ENCODE measurements at regions of chr17 and their contacts with region 1.

Region 1: GRCh38 chr17:81094509-81095382 is 59.8 kb downstream of the BAIAP2 start:
- DNase-seq: peak; percentile 100
- ATAC-seq: peak; percentile 76
- H3K4me3 ChIP-seq: no peak overlapping the region
- H3K27ac ChIP-seq: peak overlapping the region; percentile 58
- H3K4me1 ChIP-seq: peaks cover 37% of the 10 kb centered on the region
- H3K27me3 ChIP-seq: no peaks in the 10 kb centered on the region
- CTCF ChIP-seq: 0 out of 2 replicates have a peak, but pooled peaks have one; percentile 8
- POLR2A ChIP-seq: peak; percentile 79
- RAD21 ChIP-seq: no peak; the same call in 1 of the 2 replicates

Region 2: GRCh38 chr17:81025741-81026129 is 69.0 kb before region 1 on chr17:
- CTCF ChIA-PET with region 1: interaction called, 15 read pairs
- POLR2A ChIA-PET with region 1: interaction called, 3 read pairs
- dilution Hi-C with region 1: no loop called
- in situ Hi-C with region 1: loop called (anchors 5 kb)
- intact Hi-C with region 1: no loop called
- DNase-seq: no peak
- ATAC-seq: no peak
- H3K4me3 ChIP-seq: no peak overlapping the region
- H3K27ac ChIP-seq: no peak overlapping the region
- H3K4me1 ChIP-seq: peaks cover 2% of the 10 kb centered on the region; the same call in 1 of the 2 replicates
- H3K27me3 ChIP-seq: peaks cover 32% of the 10 kb centered on the region
- CTCF ChIP-seq: no peak
- POLR2A ChIP-seq: no peak
- RAD21 ChIP-seq: no peak

Region 3: DNA sequence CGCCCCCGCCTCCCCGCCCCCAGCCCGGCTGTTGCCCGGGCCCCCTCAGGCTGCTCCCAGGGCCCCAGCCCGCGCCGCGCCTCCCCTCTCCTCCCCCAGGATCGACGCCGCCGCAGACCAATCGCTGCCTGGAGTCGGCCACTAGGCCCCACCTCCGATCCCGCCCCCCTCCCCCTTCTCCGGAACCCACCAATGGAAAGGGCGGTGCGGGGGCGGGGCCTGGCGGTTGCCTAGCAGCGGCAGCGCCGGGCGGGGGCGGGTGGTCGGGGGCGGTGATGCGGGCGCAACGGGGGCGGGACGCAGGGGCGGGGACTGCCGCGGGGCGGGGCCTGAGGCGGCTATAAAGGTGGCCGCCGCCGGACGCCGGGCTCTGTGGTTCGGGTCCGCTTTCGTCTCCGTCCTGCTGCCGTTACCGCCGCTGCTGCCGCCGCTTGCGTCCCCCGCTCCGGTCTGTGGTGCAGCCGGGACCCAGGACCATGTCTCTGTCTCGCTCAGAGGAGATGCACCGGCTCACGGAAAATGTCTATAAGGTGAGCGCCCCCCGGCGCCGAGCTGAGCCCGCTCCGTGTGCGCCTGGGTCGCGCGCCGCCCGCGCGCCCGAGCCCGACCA is 59.9 kb before region 1 on chr17 and contains the start of gene BAIAP2:
- CTCF ChIA-PET with region 1: no interaction called
- POLR2A ChIA-PET with region 1: no interaction called
- dilution Hi-C with region 1: no loop called
- in situ Hi-C with region 1: loop called (anchors 5 kb)
- intact Hi-C with region 1: no loop called
- DNase-seq: peak; percentile 90
- ATAC-seq: peak; percentile 93
- H3K4me3 ChIP-seq: peak within 1 kb of the TSS; percentile 94
- H3K27ac ChIP-seq: peak within 1 kb of the TSS; percentile 55; the same call in 1 of the 2 replicates
- H3K4me1 ChIP-seq: peaks cover 6% of the 10 kb centered on the region
- H3K27me3 ChIP-seq: no peaks in the 10 kb centered on the region
- CTCF ChIP-seq: peak; percentile 17; the same call in 1 of the 2 replicates
- POLR2A ChIP-seq: peak; percentile 99
- RAD21 ChIP-seq: 0 out of 2 replicates have a peak, but pooled peaks have one; percentile 24
- total RNA-seq, gene BAIAP2: 18.3 and 22.8 TPM in 2 replicates

Measured in IMR-90 (cell line).